ENCODE measurements at regions of chr3 and their contacts with region 1.

Region 1: DNA sequence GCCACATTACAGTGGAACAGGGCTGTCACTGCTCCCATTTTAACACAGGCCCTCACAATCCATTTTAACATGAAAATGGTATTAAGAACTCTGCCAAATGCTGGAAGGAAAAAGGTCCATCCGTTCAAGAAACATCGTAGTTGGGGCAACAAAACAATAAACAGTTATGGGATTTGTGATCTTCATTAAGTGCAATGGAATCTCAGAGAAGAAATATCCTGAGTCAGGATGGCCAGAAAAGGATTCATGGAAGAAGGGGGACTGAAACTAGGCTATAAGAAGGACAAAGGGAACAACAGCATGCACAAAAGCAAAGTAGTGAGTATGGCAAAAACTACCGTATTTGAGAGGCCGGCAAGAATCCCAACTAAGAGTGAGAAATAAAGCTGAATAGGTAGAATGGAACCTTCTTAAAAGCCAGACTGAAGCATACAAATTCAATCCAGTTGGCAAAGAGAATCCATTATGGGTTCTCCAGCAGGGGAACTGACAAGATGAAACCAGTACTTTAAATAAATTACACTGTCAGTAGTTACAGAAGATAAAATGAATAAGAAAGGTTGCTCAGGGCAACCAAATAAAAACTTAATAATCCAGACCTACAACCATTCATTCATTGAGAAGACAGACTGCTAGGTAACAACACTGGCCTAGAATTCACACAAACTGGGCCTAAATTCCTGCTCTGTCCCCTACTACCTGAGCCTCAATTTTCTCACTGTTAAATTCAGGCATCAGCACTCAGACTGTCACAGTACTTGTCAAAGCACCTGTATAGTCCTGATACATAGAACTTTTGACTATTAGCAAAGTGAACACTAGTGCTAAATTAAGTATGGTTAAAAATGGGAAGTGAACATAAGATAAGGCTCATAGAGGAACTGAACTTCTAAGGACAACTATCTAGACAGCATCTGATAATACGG is 6.3 kb downstream of the TBL1XR1 start:
- DNase-seq: no peak
- H3K4me3 ChIP-seq: no peak overlapping the region
- H3K27ac ChIP-seq: peak overlapping the region; percentile 12
- H3K4me1 ChIP-seq: peaks cover 26% of the 10 kb centered on the region
- H3K27me3 ChIP-seq: no peaks in the 10 kb centered on the region
- CTCF ChIP-seq: no peak

Region 2: GRCh38 chr3:177124882-177125281 is 66.1 kb before region 1 on chr3:
- CTCF ChIA-PET with region 1: no interaction called
- POLR2A ChIA-PET with region 1: no interaction called
- intact Hi-C with region 1: loop called (anchors 5 kb)
- DNase-seq: no peak
- H3K4me3 ChIP-seq: no peak overlapping the region
- H3K27ac ChIP-seq: no peak overlapping the region
- H3K4me1 ChIP-seq: peaks cover 46% of the 10 kb centered on the region
- H3K27me3 ChIP-seq: no peaks in the 10 kb centered on the region
- CTCF ChIP-seq: no peak

Region 3: GRCh38 chr3:177426878-177427495 is 236.0 kb after region 1 on chr3:
- CTCF ChIA-PET with region 1: no interaction called
- POLR2A ChIA-PET with region 1: no interaction called
- intact Hi-C with region 1: no loop called
- DNase-seq: no peak
- H3K4me3 ChIP-seq: no peak overlapping the region
- H3K27ac ChIP-seq: no peak overlapping the region
- H3K4me1 ChIP-seq: peaks cover 16% of the 10 kb centered on the region
- H3K27me3 ChIP-seq: no peaks in the 10 kb centered on the region
- CTCF ChIP-seq: no peak